Mammary epithelial cell (primary cell): ENCODE measurements at regions of chr7 and their contacts with region 1.

Region 1: DNA sequence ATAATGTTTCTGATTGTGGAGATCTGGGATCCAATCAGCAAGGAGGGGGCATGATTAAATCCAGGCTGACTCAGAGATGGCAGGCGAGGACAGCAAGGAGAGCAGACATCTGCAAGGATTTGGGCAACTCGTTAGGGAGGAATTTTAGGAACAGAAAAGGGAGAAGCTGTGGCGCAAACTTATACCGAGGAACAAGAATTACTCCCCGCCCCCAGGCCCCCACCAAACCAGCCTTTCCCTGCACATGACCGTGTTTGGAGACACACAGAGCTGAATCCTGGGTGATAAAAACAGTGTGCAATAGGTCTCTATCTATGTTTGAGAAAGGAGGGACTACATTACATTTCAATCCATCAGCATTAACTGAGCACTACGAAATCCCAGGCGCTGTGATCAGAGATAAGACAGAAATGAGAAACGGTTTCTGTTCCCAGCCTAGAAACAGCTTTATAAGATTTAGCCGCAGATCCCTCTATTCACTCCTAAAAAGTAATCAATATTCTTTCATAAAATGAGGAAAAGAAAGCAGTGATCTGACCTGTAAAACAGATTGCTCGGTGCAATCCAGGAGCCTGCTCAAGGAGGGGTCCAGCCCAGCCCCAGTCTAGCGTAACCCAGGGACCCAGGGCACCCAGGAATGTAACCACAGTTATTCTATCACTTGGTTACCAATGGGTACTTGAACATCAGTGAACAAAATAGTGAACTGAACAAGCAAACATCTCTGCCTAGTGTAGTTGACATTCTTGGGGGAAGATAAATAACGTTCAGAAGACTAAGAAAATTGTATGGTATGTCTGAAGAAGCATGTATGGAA is 37.2 kb upstream of the RAPGEF5 start:
- DNase-seq: peak; percentile 18
- H3K4me3 ChIP-seq: no peak overlapping the region
- H3K27ac ChIP-seq: no peak overlapping the region
- H3K4me1 ChIP-seq: no peaks in the 10 kb centered on the region
- H3K27me3 ChIP-seq: no peaks in the 10 kb centered on the region
- CTCF ChIP-seq: no peak

Region 2: GRCh38 chr7:22184549-22185199 is 209.4 kb before region 1 on chr7:
- CTCF ChIA-PET with region 1: no interaction called
- dilution Hi-C with region 1: loop called (anchors 10 kb)
- in situ Hi-C with region 1: no loop called
- intact Hi-C with region 1: no loop called
- DNase-seq: no peak
- H3K4me3 ChIP-seq: no peak overlapping the region
- H3K27ac ChIP-seq: no peak overlapping the region
- H3K4me1 ChIP-seq: no peaks in the 10 kb centered on the region
- H3K27me3 ChIP-seq: no peaks in the 10 kb centered on the region
- CTCF ChIP-seq: no peak

Region 3: GRCh38 chr7:22255834-22256233 is 138.3 kb before region 1 on chr7:
- CTCF ChIA-PET with region 1: no interaction called
- dilution Hi-C with region 1: no loop called
- in situ Hi-C with region 1: no loop called
- intact Hi-C with region 1: no loop called
- DNase-seq: no peak
- H3K4me3 ChIP-seq: no peak overlapping the region
- H3K27ac ChIP-seq: no peak overlapping the region
- H3K4me1 ChIP-seq: no peaks in the 10 kb centered on the region
- H3K27me3 ChIP-seq: no peaks in the 10 kb centered on the region
- CTCF ChIP-seq: no peak

Region 4: DNA sequence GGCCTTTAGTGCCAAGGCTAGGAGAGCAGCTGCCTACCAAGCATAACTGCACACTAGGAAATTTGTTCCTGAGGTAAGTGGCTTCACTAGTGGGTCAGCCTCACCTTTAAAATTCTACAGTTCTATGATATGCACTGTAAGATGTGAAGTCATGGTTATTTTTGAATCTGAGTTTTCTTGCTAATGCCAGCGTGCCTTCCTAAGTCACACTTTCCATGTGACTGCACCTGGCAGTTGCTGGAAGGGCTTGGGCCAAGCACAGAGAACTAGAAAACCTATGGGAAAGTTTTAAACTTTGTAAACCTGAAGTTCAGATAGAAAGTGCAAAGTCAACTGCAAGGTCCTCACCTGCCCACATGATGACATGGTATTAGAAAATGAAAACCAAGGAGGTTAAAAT is 63.4 kb after region 1 on chr7:
- CTCF ChIA-PET with region 1: no interaction called
- dilution Hi-C with region 1: loop called (anchors 5 kb)
- in situ Hi-C with region 1: no loop called
- intact Hi-C with region 1: no loop called
- DNase-seq: no peak
- H3K4me3 ChIP-seq: no peak overlapping the region
- H3K27ac ChIP-seq: no peak overlapping the region
- H3K4me1 ChIP-seq: no peaks in the 10 kb centered on the region
- H3K27me3 ChIP-seq: no peaks in the 10 kb centered on the region
- CTCF ChIP-seq: no peak